Calu3 (cell line): ENCODE measurements at regions of chr14 and their contacts with region 1.

Region 1: DNA sequence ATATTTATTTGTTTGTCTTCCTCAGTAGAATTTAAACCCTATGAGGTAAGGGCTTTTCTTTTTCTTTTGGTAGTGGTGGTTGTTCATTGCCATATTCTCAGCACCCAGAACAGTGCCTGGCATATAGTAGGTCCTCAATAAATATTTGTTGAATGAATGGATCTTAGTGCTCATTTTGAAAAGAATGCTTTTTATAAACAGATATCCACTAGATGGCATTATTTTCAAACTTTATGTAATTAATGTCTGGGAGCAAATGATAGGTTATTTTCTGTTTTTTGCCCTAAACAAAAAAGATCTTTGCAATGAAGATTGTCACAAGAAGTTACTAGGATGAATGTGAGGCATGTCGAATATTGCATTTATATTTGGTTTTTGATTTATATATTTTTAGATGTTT is 64.1 kb downstream of the RAD51B start:
- DNase-seq: no peak
- H3K4me3 Mint-ChIP-seq: no peak overlapping the region
- H3K27ac Mint-ChIP-seq: no peak overlapping the region
- H3K4me1 Mint-ChIP-seq: no peaks in the 10 kb centered on the region
- H3K27me3 Mint-ChIP-seq: no peaks in the 10 kb centered on the region
- CTCF ChIP-seq: no peak

Region 2: DNA sequence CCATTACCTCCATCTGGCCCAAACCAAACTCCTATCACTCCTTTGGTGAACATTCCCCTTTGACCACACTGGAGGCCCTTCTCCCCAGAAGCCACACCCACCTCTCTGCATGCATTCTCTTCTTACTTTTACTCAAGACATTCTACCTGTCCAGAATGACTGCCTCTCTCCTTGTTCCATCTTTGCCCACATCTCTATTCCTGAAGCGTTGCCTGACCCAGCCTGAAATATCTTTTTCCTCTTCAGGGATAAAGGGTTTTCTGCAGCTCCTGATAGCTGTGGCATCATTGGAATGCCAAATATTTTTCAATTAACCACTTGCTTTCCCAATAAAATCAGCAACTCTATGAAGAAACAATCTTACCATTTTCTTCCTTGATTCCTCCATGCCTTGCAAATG is 487.2 kb before region 1 on chr14:
- CTCF ChIA-PET with region 1: no interaction called
- intact Hi-C with region 1: no loop called
- DNase-seq: no peak
- H3K4me3 Mint-ChIP-seq: no peak overlapping the region
- H3K27ac Mint-ChIP-seq: no peak overlapping the region
- H3K4me1 Mint-ChIP-seq: peaks cover 11% of the 10 kb centered on the region
- H3K27me3 Mint-ChIP-seq: no peaks in the 10 kb centered on the region
- CTCF ChIP-seq: no peak

Region 3: GRCh38 chr14:67502881-67503699 is 380.6 kb before region 1 on chr14:
- CTCF ChIA-PET with region 1: no interaction called
- intact Hi-C with region 1: no loop called
- DNase-seq: no peak
- H3K4me3 Mint-ChIP-seq: no peak overlapping the region
- H3K27ac Mint-ChIP-seq: no peak overlapping the region
- H3K4me1 Mint-ChIP-seq: no peaks in the 10 kb centered on the region
- H3K27me3 Mint-ChIP-seq: peaks cover 27% of the 10 kb centered on the region
- CTCF ChIP-seq: no peak

Region 4: GRCh38 chr14:68843471-68844209 is 959.9 kb after region 1 on chr14:
- CTCF ChIA-PET with region 1: interaction called, 3 read pairs
- intact Hi-C with region 1: loop called (anchors 5 kb)
- DNase-seq: peak; percentile 75
- H3K4me3 Mint-ChIP-seq: peak overlapping the region; percentile 40
- H3K27ac Mint-ChIP-seq: no peak overlapping the region
- H3K4me1 Mint-ChIP-seq: peaks cover 28% of the 10 kb centered on the region
- H3K27me3 Mint-ChIP-seq: no peaks in the 10 kb centered on the region
- CTCF ChIP-seq: peak; percentile 79